Kidney (tissue), 22 donors: ENCODE measurements at regions of chr16 and their contacts with region 1.

Region 1: GRCh38 chr16:27347930-27348685 is 34.3 kb downstream of the IL4R start:
- DNase-seq: no peak
- H3K4me3 ChIP-seq: no peak overlapping the region
- H3K27ac ChIP-seq: no peak overlapping the region
- H3K4me1 ChIP-seq: no peaks in the 10 kb centered on the region
- H3K27me3 ChIP-seq: no peaks in the 10 kb centered on the region
- CTCF ChIP-seq: no peak

Region 2: GRCh38 chr16:27109666-27110523 is 238.2 kb before region 1 on chr16:
- intact Hi-C with region 1: no loop called
- DNase-seq: peak; percentile 87 to 95 (median 92)
- H3K4me3 ChIP-seq: peak overlapping the region in 1 of 3 donors; percentile 34
- H3K27ac ChIP-seq: no peak overlapping the region
- H3K4me1 ChIP-seq: no peaks in the 10 kb centered on the region
- H3K27me3 ChIP-seq: no peaks in the 10 kb centered on the region
- CTCF ChIP-seq: peak; percentile 84

Region 3: DNA sequence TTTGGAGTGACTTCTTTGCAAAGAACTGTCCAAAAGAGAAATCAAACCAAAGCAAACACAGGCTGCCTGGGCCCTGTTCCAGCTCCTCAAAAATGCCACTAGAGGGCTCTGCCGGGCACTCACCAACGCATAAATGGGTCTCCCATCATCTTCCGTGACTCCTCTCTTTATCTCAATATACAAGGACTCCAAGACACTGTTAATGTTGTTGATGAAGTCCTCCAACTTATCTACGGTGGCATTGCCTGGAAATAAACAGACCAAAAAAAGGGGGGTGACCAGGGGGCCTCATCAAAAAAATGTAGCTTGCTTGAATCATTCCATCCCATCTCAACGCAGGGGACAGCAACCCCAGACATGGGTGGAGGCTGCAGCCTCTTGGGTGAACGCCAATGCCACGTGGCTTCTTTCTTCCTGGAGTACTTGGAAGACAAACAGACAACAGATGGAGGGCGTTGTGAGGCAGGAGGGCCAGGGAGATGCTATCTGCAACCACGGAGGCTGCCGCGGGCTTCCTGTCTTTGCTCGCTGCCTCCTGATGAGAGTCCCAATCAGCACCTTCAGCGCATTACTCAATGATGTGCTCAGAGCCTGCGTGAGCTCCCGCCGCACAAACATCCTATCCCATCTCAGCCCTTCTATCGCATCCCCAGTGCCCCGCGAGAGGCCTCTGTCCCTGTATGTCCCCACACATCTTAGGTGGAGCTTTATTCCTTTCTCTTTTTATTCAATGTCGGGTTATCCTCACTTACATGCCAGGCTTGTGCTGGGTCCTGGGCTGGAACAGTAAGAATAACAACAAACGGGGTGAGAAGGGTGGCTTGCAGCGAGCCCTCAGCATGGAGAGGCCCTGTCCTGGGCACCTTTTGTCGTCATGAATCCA is 112.8 kb before region 1 on chr16:
- intact Hi-C with region 1: loop called (anchors 10 kb)
- DNase-seq: peak; percentile 58 to 95 (median 72)
- H3K4me3 ChIP-seq: peak overlapping the region in 1 of 3 donors; percentile 4
- H3K27ac ChIP-seq: peak overlapping the region; percentile 78 to 81
- H3K4me1 ChIP-seq: peaks cover 0 to 25% (median 14%) of the 10 kb centered on the region in 3 donors
- H3K27me3 ChIP-seq: no peaks in the 10 kb centered on the region
- CTCF ChIP-seq: peak; percentile 63

Region 4: GRCh38 chr16:27387724-27388123 is 39.6 kb after region 1 on chr16:
- intact Hi-C with region 1: no loop called
- DNase-seq: no peak
- H3K4me3 ChIP-seq: no peak overlapping the region
- H3K27ac ChIP-seq: no peak overlapping the region
- H3K4me1 ChIP-seq: no peaks in the 10 kb centered on the region
- H3K27me3 ChIP-seq: no peaks in the 10 kb centered on the region
- CTCF ChIP-seq: no peak

Region 5: DNA sequence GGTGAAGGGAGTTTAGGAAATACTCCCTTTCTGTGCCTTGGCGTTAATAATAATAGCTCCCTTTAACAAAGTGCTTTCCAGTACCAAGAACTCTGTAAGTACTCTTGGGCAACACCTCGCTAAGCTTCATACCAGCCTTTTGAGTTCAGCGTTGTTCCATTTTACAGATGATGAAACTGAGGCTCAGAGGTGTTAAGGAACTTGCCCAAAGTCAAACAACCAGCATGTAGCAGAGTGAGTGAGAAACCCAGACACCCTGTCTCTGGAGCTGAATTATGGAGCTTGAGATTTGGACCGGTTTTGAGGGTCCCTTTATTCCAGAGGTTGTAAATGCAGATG is 202.4 kb after region 1 on chr16:
- intact Hi-C with region 1: no loop called
- DNase-seq: no peak
- H3K4me3 ChIP-seq: peak overlapping the region; percentile 88 to 91 (median 88)
- H3K27ac ChIP-seq: no peak overlapping the region
- H3K4me1 ChIP-seq: peaks cover 0 to 20% (median 8%) of the 10 kb centered on the region in 3 donors
- H3K27me3 ChIP-seq: no peaks in the 10 kb centered on the region
- CTCF ChIP-seq: no peak

Region 6: GRCh38 chr16:27618606-27619327 is 270.7 kb after region 1 on chr16:
- intact Hi-C with region 1: no loop called
- DNase-seq: peak in 2 of 5 donors; percentile 53 to 61
- H3K4me3 ChIP-seq: no peak overlapping the region
- H3K27ac ChIP-seq: no peak overlapping the region
- H3K4me1 ChIP-seq: peaks cover 4 to 9% (median 6%) of the 10 kb centered on the region in 3 donors
- H3K27me3 ChIP-seq: no peaks in the 10 kb centered on the region
- CTCF ChIP-seq: no peak